ENCODE measurements at regions of chr1 and their contacts with region 1.

Region 1: GRCh38 chr1:63537940-63538339 is 14.6 kb downstream of the EFCAB7 start:
- DNase-seq: no peak
- ATAC-seq: no peak
- H3K4me3 ChIP-seq: no peak overlapping the region
- H3K27ac ChIP-seq: no peak overlapping the region
- H3K4me1 ChIP-seq: no peaks in the 10 kb centered on the region
- H3K27me3 ChIP-seq: no peaks in the 10 kb centered on the region
- CTCF ChIP-seq: peak; percentile 15 to 60 (median 56); a peak in 2 of 6 replicates
- POLR2A ChIP-seq: no peak
- RAD21 ChIP-seq: peak; percentile 67

Region 2: DNA sequence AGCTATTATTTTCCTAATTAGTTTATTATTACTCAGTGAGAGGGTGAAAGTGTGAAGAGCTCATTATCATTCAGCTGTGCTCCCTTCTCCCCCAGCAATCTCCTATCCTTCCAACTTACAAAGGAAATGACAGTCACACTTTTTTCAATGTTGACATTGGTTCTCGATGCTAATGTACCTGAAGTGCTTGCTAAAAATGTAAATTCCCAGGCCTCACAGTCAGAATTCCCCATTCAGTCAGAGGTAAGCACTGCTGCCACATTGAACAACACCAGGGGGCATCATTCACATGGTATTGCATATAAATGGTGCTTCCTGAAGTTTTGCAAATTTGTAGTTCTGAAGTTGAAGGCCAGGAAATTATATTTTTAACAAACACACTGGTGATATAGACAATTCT is 348.3 kb before region 1 on chr1:
- CTCF ChIA-PET with region 1: interaction called, 10 read pairs
- POLR2A ChIA-PET with region 1: no interaction called
- RAD21 ChIA-PET with region 1: no interaction called
- intact Hi-C with region 1: no loop called
- DNase-seq: peak; percentile 15
- ATAC-seq: peak; percentile 61
- H3K4me3 ChIP-seq: no peak overlapping the region
- H3K27ac ChIP-seq: no peak overlapping the region
- H3K4me1 ChIP-seq: no peaks in the 10 kb centered on the region
- H3K27me3 ChIP-seq: no peaks in the 10 kb centered on the region
- CTCF ChIP-seq: peak; percentile 33 to 58 (median 49); a peak in 5 of 6 replicates
- POLR2A ChIP-seq: no peak
- RAD21 ChIP-seq: peak; percentile 48

Region 3: DNA sequence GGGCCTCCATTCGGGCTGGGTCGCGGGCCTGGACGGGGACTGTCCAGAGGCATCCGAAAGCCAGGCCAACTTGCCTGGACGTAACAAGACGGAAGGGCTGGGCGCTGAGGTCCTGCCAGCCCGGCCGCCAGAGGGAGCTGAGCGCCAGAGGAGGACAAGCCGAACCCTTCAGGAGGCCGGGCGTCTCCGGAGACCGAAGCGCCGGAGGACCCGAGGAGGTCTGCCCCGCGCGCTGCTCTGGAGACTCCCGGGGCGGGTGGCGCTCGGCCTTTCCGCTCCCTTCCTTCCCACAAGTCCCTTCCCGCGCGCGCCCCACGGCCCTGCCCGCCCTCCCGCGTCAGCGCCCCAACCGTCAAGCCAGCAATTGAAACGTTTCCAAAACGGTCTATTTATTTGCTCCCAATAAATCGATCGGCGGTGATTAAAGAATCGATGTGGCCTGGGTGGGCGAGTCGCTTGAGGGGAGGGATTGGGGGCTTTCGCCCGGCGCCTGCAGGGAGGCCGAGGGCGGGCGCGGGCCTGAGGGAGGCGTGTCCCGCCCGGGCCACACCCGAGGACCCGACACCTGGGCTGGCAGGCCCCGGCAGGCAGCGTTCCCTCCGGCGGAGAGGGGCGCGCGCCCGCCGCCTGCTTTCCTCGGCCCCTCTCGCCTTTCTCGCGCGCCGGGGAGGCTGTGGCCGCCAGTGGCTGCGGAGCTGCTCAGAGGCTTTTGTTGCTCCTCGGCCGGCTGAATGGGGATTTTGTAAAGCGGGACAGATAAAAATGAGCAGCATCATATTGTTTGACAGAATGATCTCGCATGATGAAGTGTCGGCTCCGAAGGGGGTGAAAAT is 220.7 kb before region 1 on chr1:
- CTCF ChIA-PET with region 1: interaction called, 3 read pairs
- POLR2A ChIA-PET with region 1: no interaction called
- RAD21 ChIA-PET with region 1: no interaction called
- intact Hi-C with region 1: loop called (anchors 5 kb)
- DNase-seq: peak; percentile 78
- ATAC-seq: peak; percentile 93
- H3K4me3 ChIP-seq: peak overlapping the region; percentile 50 to 68
- H3K27ac ChIP-seq: peak overlapping the region; percentile 73
- H3K4me1 ChIP-seq: peaks cover 10 to 14% of the 10 kb centered on the region in 2 experiments
- H3K27me3 ChIP-seq: no peaks in the 10 kb centered on the region
- CTCF ChIP-seq: peak; percentile 59 to 88 (median 66)
- POLR2A ChIP-seq: no peak
- RAD21 ChIP-seq: peak; percentile 67

Measured in HCT116 (cell line).